Activated T-helper 1 cell treated with anti-CD3 and anti-CD28 coated beads, Interleukin-12 subunit alpha, Interleukin-12 subunit beta, Interleukin-2, Interleukin-4 antibody, amounts not matched to agents 30 ng/mL and 10 ng/mL and 1 ng/mL, durations not matched to agents 14 hours and 24 hours and 36 hours (primary cell): ENCODE measurements at regions of chr6 and their contacts with region 1.

Region 1: GRCh38 chr6:105646391-105646867 is 243.5 kb upstream of the PREP start:
- DNase-seq: peak; percentile 70
- H3K4me3 Mint-ChIP-seq: no peak overlapping the region
- H3K27ac Mint-ChIP-seq: peak overlapping the region; percentile 85
- H3K4me1 Mint-ChIP-seq: peaks cover 78% of the 10 kb centered on the region
- H3K27me3 Mint-ChIP-seq: peaks cover 4% of the 10 kb centered on the region

Region 2: DNA sequence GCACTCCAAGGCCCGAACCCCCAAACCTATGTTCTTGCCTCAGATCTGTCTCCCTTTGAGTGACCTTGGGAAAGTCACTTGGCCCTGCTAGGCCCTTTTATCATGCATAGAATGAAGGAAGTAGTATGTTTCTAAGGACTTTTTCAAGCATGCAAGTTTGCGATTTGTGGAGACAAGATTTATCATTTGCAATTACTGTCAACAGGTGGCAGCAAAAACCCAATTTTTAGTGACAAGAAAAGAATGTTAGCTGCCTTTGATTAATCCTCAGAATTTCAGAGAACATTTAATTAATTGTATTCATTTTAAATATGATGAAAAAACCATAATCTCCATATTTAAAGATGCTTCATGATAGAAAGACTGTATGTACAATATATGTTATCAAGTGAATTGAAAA is 215.2 kb before region 1 on chr6:
- intact Hi-C with region 1: loop called (anchors 2 kb)
- DNase-seq: peak; percentile 12
- H3K4me3 Mint-ChIP-seq: no peak overlapping the region
- H3K27ac Mint-ChIP-seq: no peak overlapping the region
- H3K4me1 Mint-ChIP-seq: peaks cover 5% of the 10 kb centered on the region
- H3K27me3 Mint-ChIP-seq: peaks cover 35% of the 10 kb centered on the region

Region 3: DNA sequence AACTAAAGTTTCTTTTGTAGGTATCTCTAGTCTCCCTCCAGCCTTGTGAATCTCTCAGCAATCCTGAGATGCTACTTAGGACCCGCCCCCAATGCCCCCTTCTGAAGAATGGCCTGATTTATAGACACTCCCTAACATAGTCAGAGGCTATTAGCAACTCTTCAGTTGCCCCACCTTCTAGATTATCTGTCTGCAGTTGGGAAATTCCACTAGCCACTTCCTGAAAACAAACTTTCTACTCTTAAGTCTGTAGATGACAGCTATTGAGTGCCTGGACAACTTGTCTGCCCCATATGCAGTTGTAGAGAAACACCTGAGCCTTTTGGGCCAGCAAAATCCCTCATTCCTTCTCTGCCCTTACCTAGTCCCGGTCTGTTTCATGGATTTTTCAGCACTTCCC is 55.4 kb before region 1 on chr6:
- intact Hi-C with region 1: loop called (anchors 1 kb)
- DNase-seq: peak; percentile 27
- H3K4me3 Mint-ChIP-seq: peak overlapping the region; percentile 45
- H3K27ac Mint-ChIP-seq: peak overlapping the region; percentile 57
- H3K4me1 Mint-ChIP-seq: peaks cover 82% of the 10 kb centered on the region
- H3K27me3 Mint-ChIP-seq: no peaks in the 10 kb centered on the region

Region 4: GRCh38 chr6:105692626-105693215 is 46.3 kb after region 1 on chr6:
- intact Hi-C with region 1: loop called (anchors 5 kb)
- DNase-seq: no peak
- H3K4me3 Mint-ChIP-seq: no peak overlapping the region
- H3K27ac Mint-ChIP-seq: no peak overlapping the region
- H3K4me1 Mint-ChIP-seq: peaks cover 22% of the 10 kb centered on the region
- H3K27me3 Mint-ChIP-seq: peaks cover 12% of the 10 kb centered on the region

Region 5: DNA sequence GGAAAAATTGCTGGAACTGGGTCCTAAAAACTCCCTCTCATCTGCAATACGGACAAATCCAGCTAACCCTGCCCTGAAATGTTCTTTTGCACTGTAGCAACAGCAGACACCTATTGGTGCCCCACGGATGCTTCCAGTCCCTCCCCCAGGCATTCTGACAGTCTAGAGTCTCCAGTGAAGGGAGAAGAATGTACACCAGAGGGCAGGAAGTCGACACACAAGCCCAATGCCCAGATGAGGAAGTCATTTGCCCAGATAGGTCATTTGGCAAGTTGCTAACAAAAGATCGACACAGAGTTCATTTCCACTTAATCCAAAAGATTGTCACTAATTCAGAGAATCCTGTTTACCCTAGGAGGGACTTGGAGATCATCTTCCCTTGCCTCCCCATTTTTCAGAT is 146.7 kb after region 1 on chr6:
- intact Hi-C with region 1: loop called (anchors 1 kb)
- DNase-seq: no peak
- H3K4me3 Mint-ChIP-seq: peak overlapping the region; percentile 5
- H3K27ac Mint-ChIP-seq: peak overlapping the region; percentile 66
- H3K4me1 Mint-ChIP-seq: peaks cover 86% of the 10 kb centered on the region
- H3K27me3 Mint-ChIP-seq: no peaks in the 10 kb centered on the region

Region 6: DNA sequence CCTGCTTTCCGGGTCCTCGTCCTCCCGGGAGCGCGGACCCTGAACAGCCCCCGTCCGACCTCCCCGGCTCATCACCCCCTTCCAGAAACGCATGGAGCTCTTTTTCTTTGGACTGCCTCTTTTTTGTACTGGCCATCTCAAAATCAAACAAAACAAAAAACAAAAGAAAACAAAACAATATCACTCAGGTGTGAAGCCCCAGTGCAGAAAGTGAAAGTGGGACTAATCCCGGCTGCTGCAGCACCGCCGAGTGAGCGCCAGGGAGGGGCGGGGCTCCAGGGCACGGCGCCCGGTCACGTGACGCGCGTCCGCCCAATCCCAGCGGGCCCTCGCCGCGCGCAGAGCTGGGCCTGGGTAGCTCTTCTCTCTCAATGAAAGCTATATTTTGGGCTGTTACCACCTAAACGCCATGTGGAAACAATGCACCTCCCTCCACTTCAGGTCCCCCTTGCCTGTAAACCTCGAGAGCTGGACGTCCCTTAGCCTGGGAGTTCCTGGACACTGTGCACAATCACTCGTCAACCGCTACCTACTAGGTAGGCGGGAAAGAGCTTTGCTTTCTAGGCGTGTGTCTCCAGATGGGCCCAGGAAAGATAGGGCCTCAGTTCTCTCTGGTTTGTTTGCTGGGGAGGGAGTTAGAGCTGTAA is 346.0 kb after region 1 on chr6:
- intact Hi-C with region 1: loop called (anchors 1 kb)
- DNase-seq: peak; percentile 91
- H3K4me3 Mint-ChIP-seq: peak overlapping the region; percentile 89
- H3K27ac Mint-ChIP-seq: peak overlapping the region; percentile 96
- H3K4me1 Mint-ChIP-seq: peaks cover 66% of the 10 kb centered on the region
- H3K27me3 Mint-ChIP-seq: peaks cover 24% of the 10 kb centered on the region

Region 7: DNA sequence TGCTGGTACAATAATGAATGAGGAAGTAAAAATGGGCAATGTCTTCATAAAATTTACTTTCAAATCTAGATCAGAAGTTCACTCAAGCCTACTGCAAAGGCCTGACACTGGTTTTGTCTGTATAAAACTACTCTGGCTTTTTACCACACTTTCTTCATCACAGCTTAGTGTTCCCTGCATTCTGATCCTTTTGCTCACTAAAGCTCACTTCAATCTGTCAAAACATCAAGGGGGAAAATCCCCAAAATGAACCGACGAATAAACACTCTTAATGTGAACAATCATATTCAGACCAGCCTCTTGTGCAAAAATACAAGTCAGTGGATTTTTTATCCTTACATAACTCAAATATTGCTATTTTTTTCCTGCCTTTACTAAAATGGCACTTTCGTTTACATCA is 538.2 kb after region 1 on chr6:
- intact Hi-C with region 1: loop called (anchors 1 kb)
- DNase-seq: no peak
- H3K4me3 Mint-ChIP-seq: no peak overlapping the region
- H3K27ac Mint-ChIP-seq: no peak overlapping the region
- H3K4me1 Mint-ChIP-seq: peaks cover 70% of the 10 kb centered on the region
- H3K27me3 Mint-ChIP-seq: no peaks in the 10 kb centered on the region

Region 8: DNA sequence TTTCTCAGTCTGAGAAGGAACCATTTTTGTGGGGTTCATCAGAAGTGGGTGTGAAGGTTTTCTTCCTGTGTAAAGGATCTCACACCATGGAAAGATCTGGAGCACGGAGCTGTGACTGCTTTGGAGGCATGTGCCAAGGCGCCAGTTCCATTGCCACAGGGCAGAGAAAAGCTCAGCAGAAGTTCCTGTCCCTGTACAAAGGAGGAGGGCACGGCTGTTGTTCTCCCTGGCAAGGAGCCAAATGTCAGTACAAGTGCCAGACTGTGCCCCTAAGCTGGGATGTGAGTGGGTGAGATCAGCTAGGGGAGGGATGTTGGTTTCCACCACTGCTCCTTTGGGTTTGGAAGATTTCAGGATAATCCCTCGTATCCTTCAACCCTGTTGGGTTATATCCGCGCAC is 831.4 kb after region 1 on chr6:
- intact Hi-C with region 1: no loop called
- DNase-seq: no peak
- H3K4me3 Mint-ChIP-seq: no peak overlapping the region
- H3K27ac Mint-ChIP-seq: no peak overlapping the region
- H3K4me1 Mint-ChIP-seq: no peaks in the 10 kb centered on the region
- H3K27me3 Mint-ChIP-seq: peaks cover 5% of the 10 kb centered on the region